CD8-positive, alpha-beta T cell (primary cell): ENCODE measurements at regions of chr4 and their contacts with region 1.

Region 1: GRCh38 chr4:139177868-139178611 is 1.0 kb upstream of the ELF2 start:
- DNase-seq: peak; percentile 73 to 94 (median 88)
- ATAC-seq: peak; percentile 73
- H3K4me3 ChIP-seq: peak overlapping the region; percentile 73 to 99
- H3K4me3 Mint-ChIP-seq: peak overlapping the region; percentile 89
- H3K27ac ChIP-seq: peak overlapping the region; percentile 54 to 67
- H3K27ac Mint-ChIP-seq: peak overlapping the region; percentile 85
- H3K4me1 ChIP-seq: peaks cover 5% of the 10 kb centered on the region
- H3K4me1 Mint-ChIP-seq: peaks cover 19% of the 10 kb centered on the region
- H3K27me3 ChIP-seq: no peaks in the 10 kb centered on the region
- H3K27me3 Mint-ChIP-seq: no peaks in the 10 kb centered on the region
- CTCF ChIP-seq: no peak

Region 2: GRCh38 chr4:139083956-139084803 is 93.9 kb before region 1 on chr4:
- CTCF ChIA-PET with region 1: no interaction called
- POLR2A ChIA-PET with region 1: interaction called, 20 read pairs
- intact Hi-C with region 1: loop called (anchors 1 kb)
- DNase-seq: peak; percentile 54 to 92 (median 80)
- ATAC-seq: peak; percentile 41
- H3K4me3 ChIP-seq: peak overlapping the region; percentile 80 to 98
- H3K4me3 Mint-ChIP-seq: peak overlapping the region; percentile 87
- H3K27ac ChIP-seq: peak overlapping the region; percentile 93 to 96
- H3K27ac Mint-ChIP-seq: peak overlapping the region; percentile 94
- H3K4me1 ChIP-seq: peaks cover 25% of the 10 kb centered on the region
- H3K4me1 Mint-ChIP-seq: peaks cover 38% of the 10 kb centered on the region
- H3K27me3 ChIP-seq: no peaks in the 10 kb centered on the region
- H3K27me3 Mint-ChIP-seq: no peaks in the 10 kb centered on the region
- CTCF ChIP-seq: peak; percentile 18

Region 3: DNA sequence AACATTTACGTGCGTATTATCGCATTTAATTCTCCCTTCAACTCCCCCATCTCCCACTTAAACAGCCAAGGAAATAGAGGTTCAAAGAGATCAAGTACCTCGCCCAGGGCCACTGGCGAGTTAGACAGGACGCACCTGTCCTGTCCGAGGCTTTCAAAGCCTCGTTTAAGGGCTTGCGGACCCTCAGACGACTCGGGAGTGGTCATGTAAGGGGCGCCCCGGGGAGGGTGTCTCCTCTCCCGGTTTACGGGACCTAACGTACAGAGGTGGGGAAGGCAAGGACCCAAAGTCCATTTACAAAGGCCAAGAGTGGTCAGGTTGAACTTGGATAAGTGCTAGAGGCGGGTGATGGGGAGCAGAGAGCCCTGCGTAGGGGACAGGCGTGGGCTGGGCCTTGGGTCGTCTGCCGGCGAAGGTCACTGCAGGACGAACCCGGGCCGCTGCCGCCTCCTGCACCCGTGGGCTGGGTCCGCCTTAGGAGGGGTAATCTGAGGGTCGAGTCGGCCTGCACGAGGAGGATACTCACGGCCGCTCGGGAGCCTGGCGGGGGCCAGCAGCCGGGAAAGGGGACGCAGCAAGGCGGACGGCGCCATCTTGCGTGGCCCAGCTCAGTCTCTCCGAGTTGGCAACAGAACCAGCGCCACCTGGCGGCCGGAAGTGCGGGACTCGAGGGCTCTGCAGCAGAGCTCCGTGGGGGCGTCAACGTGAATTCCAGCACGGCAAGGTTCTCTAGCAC is 117.3 kb after region 1 on chr4:
- CTCF ChIA-PET with region 1: interaction called, 3 read pairs
- POLR2A ChIA-PET with region 1: interaction called, 16 read pairs
- intact Hi-C with region 1: loop called (anchors 1 to 2 kb)
- DNase-seq: peak; percentile 94 to 100 (median 99)
- ATAC-seq: peak; percentile 91
- H3K4me3 ChIP-seq: peak overlapping the region; percentile 65 to 91
- H3K4me3 Mint-ChIP-seq: peak overlapping the region; percentile 91
- H3K27ac ChIP-seq: peak overlapping the region; percentile 74 to 87
- H3K27ac Mint-ChIP-seq: peak overlapping the region; percentile 95
- H3K4me1 ChIP-seq: peaks cover 31% of the 10 kb centered on the region
- H3K4me1 Mint-ChIP-seq: peaks cover 37% of the 10 kb centered on the region
- H3K27me3 ChIP-seq: no peaks in the 10 kb centered on the region
- H3K27me3 Mint-ChIP-seq: no peaks in the 10 kb centered on the region
- CTCF ChIP-seq: peak; percentile 77

Region 4: DNA sequence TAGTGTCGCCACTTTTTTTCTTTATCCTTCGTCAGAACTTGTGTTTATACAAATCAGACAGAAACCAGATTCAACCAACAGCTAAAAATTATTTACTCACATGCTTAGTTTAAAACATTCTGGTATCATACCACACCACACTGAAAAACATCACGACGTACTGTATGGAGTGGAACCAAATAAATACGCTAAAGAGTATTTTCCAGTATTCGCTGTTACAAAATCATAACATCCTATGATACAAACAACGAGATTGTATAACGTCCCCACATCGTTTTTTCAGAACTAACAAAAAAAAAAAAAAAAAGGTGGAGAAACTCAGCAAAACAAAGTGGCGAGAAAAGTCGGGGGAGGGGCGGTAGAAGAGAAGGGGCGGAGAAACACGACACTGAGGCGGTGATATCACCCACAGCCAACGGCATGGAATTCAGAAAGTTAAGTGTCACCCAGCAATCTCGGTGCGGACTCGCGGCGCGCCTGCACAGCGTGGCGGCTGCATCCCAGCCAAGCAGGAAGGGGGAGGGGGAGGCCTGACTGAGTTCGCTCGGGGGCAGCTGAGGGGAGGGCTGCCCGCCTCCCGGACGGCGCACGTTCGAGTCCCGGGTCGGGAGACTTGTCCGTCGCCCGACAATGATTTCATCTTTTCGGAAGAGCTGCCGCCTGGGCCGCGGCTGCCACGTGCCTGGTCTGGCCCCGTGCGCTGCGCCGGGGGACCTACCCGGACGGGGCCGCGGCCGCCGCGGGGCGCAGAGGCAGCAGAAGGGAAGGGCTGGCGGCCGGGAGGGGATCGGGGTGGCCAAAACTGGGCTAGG is 377.1 kb after region 1 on chr4:
- CTCF ChIA-PET with region 1: no interaction called
- POLR2A ChIA-PET with region 1: no interaction called
- intact Hi-C with region 1: loop called in 1 of 2 experiments (anchors 5 kb)
- DNase-seq: peak; percentile 43 to 89 (median 74)
- ATAC-seq: peak; percentile 75
- H3K4me3 ChIP-seq: peak overlapping the region; percentile 79 to 84
- H3K4me3 Mint-ChIP-seq: peak overlapping the region; percentile 94
- H3K27ac ChIP-seq: peak overlapping the region in 1 of 2 experiments; percentile 53
- H3K27ac Mint-ChIP-seq: peak overlapping the region; percentile 95
- H3K4me1 ChIP-seq: peaks cover 9% of the 10 kb centered on the region
- H3K4me1 Mint-ChIP-seq: peaks cover 31% of the 10 kb centered on the region
- H3K27me3 ChIP-seq: peaks cover 0 to 9% of the 10 kb centered on the region in 2 experiments
- H3K27me3 Mint-ChIP-seq: peaks cover 9% of the 10 kb centered on the region
- CTCF ChIP-seq: no peak

Region 5: DNA sequence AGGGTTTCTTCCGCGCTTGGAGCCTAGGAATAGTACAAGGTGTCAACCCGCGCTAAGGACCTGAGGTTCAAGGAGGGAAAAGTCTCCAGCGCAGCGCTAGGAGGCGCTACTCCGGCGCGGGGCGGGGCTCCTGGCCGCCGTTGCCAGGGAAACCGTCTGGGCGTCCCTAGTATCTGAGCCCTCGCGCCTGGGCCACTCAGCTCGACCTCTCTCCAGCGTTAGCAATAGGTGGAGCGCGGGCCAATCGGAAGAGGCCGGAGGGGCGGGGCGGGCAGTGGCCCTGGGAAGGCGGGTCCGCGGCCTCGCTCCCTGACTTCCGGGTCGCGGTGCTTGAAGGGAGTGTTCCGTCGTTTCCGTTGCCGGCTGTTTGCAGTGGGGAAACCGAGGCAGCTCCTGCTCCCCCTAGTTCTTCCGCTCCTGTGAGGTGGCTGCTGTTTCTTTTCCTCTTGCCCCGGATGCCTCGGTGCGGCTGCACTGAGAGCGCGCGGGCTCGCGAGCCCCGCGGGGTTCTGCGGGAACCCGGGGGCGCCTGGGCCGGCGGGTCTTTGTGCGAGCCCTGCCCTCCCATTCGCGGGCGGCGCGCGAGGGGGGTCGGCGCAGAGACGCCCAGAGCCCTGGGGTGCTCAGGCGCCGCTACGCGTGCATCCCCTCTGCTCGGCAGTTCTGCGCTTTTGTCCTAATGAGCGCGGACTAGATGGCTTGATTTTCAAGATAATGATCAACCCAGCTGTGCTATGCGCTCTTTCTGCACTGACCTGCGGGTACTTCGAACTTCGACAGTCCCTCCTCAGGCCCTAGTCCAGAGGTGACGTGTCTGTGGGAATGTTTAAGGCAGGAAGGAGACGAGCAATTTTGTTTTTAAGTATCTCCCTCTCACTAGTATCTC is 1346.1 kb after region 1 on chr4 and contains the start of gene ELMOD2:
- CTCF ChIA-PET with region 1: no interaction called
- POLR2A ChIA-PET with region 1: no interaction called
- intact Hi-C with region 1: loop called (anchors 5 to 10 kb)
- DNase-seq: peak; percentile 93 to 99 (median 97)
- ATAC-seq: peak; percentile 98
- H3K4me3 ChIP-seq: peak within 1 kb of the TSS; percentile 72 to 77
- H3K4me3 Mint-ChIP-seq: peak within 1 kb of the TSS; percentile 89
- H3K27ac ChIP-seq: peak within 1 kb of the TSS; percentile 59 to 63
- H3K27ac Mint-ChIP-seq: peak within 1 kb of the TSS; percentile 86
- H3K4me1 ChIP-seq: peaks cover 9% of the 10 kb centered on the region
- H3K4me1 Mint-ChIP-seq: peaks cover 27% of the 10 kb centered on the region
- H3K27me3 ChIP-seq: no peaks in the 10 kb centered on the region
- H3K27me3 Mint-ChIP-seq: no peaks in the 10 kb centered on the region
- CTCF ChIP-seq: peak; percentile 88
- total RNA-seq, gene ELMOD2: 7.2 to 8.8 TPM